ENCODE measurements at regions of chr1 and their contacts with region 1.

Region 1: GRCh38 chr1:97745912-97746311 is 174.9 kb downstream of the DPYD start:
- DNase-seq: no peak
- CTCF ChIP-seq: no peak

Region 2: GRCh38 chr1:97758541-97759057 is 12.7 kb after region 1 on chr1:
- CTCF ChIA-PET with region 1: interaction called, 18 read pairs
- POLR2A ChIA-PET with region 1: no interaction called
- DNase-seq: no peak
- CTCF ChIP-seq: no peak

Measured in GM10248 (cell line).